CD4-positive, alpha-beta memory T cell (primary cell): ENCODE measurements at regions of chr17 and their contacts with region 1.

Region 1: DNA sequence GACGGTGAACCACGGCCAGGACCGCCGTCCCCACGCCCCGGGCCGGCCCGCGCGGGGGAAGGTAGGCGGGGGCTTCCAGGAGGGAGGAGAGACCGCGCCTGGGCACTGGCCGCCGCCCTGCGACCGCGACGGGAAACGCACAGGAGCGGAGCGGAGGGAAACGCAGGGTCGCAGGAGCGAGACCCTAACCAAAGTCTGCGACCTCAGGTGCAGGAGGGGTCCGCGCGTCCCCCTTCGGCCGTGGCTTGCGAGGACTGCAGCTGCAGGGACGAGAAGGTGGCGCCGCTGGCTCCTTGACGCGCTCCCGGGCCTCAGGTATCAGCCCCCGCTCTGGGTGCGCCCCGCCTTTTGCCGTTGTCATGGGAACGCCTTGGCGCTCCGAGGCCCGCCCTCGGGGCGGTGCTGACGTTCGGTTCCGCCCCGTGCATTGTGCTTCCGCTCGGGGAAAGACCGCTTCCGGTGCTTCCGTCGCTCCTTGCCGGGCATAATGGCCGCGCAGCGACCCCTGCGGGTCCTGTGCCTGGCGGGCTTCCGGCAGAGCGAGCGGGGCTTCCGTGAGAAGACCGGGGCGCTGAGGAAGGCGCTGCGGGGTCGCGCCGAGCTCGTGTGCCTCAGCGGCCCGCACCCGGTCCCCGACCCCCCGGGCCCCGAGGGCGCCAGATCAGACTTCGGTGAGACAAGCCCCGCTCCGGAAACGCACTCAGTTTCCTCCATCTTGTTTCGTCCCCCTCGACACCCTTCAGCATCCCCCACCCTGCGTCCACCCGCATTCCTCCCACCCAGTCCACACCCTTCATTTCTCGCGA is at the start of gene OVCA2:
- DNase-seq: peak; percentile 96 to 98 (median 97)
- H3K4me3 ChIP-seq: peak within 1 kb of the TSS; percentile 64 to 79
- H3K4me3 Mint-ChIP-seq: peak within 1 kb of the TSS; percentile 90 to 94 (median 92)
- H3K27ac ChIP-seq: peak within 1 kb of the TSS; percentile 85
- H3K27ac Mint-ChIP-seq: peak within 1 kb of the TSS; percentile 89 to 98 (median 96)
- H3K4me1 ChIP-seq: peaks cover 24% of the 10 kb centered on the region
- H3K4me1 Mint-ChIP-seq: peaks cover 6 to 32% (median 14%) of the 10 kb centered on the region in 4 donors
- H3K27me3 ChIP-seq: no peaks in the 10 kb centered on the region
- H3K27me3 Mint-ChIP-seq: no peaks in the 10 kb centered on the region
- total RNA-seq, gene OVCA2: 27.9 to 36.7 TPM

Region 2: GRCh38 chr17:1882836-1883235 is 158.9 kb before region 1 on chr17:
- CTCF ChIA-PET with region 1: interaction called, 3 read pairs
- POLR2A ChIA-PET with region 1: no interaction called
- intact Hi-C with region 1: loop called (anchors 1 kb)
- DNase-seq: peak in 2 of 5 donors; percentile 26 to 28
- H3K4me3 ChIP-seq: no peak overlapping the region
- H3K4me3 Mint-ChIP-seq: no peak overlapping the region
- H3K27ac ChIP-seq: no peak overlapping the region
- H3K27ac Mint-ChIP-seq: no peak overlapping the region
- H3K4me1 ChIP-seq: no peaks in the 10 kb centered on the region
- H3K4me1 Mint-ChIP-seq: peaks cover 0 to 4% (median 2%) of the 10 kb centered on the region in 4 donors
- H3K27me3 ChIP-seq: no peaks in the 10 kb centered on the region
- H3K27me3 Mint-ChIP-seq: no peaks in the 10 kb centered on the region

Region 3: DNA sequence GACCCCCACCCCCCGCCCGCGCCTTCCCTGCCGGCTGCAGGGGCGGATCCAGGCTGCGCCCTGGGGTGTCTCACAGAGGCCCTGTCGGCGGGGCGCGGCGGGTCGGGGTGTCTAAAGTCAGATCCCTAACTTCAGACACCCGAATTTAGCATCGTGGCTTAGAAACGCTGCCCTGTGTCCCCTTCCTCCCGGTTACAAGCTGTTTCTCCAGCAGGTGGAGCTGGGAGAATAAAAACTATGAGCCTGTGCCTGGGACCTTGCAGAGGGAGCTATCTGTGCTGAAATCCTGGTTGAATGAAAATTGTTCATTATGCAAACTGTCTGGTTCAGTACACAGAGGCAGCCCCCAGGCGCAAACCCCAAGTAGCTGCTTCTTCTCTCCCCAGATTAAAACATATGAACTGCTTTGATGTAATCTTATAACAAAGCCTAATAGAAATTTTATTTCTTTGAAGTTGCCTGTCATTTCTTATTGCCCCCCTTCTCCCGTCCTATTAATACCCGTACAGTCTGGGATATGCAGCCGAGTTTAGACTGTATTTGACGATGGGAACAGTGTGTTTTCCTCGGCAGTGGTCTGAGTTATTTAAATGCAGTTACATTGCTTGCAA is 133.0 kb before region 1 on chr17:
- CTCF ChIA-PET with region 1: no interaction called
- POLR2A ChIA-PET with region 1: no interaction called
- intact Hi-C with region 1: loop called (anchors 1 kb)
- DNase-seq: peak in 4 of 5 donors; percentile 12 to 22 (median 18)
- H3K4me3 ChIP-seq: no peak overlapping the region
- H3K4me3 Mint-ChIP-seq: peak overlapping the region; percentile 26 to 65 (median 51)
- H3K27ac ChIP-seq: no peak overlapping the region
- H3K27ac Mint-ChIP-seq: no peak overlapping the region
- H3K4me1 ChIP-seq: peaks cover 14% of the 10 kb centered on the region
- H3K4me1 Mint-ChIP-seq: peaks cover 5 to 12% (median 8%) of the 10 kb centered on the region in 4 donors
- H3K27me3 ChIP-seq: peaks cover 20% of the 10 kb centered on the region
- H3K27me3 Mint-ChIP-seq: peaks cover 34 to 41% of the 10 kb centered on the region in 2 donors